Endothelial cell of umbilical vein (primary cell): ENCODE measurements at regions of chr11 and their contacts with region 1.

Region 1: GRCh38 chr11:35237860-35238715 is 99.1 kb downstream of the CD44 start:
- DNase-seq: peak; percentile 70
- H3K4me3 ChIP-seq: no peak overlapping the region
- H3K27ac ChIP-seq: no peak overlapping the region
- H3K4me1 ChIP-seq: no peaks in the 10 kb centered on the region
- H3K27me3 ChIP-seq: peaks cover 5 to 21% of the 10 kb centered on the region in 2 experiments
- CTCF ChIP-seq: peak; percentile 78 to 81
- POLR2A ChIP-seq: no peak

Region 2: DNA sequence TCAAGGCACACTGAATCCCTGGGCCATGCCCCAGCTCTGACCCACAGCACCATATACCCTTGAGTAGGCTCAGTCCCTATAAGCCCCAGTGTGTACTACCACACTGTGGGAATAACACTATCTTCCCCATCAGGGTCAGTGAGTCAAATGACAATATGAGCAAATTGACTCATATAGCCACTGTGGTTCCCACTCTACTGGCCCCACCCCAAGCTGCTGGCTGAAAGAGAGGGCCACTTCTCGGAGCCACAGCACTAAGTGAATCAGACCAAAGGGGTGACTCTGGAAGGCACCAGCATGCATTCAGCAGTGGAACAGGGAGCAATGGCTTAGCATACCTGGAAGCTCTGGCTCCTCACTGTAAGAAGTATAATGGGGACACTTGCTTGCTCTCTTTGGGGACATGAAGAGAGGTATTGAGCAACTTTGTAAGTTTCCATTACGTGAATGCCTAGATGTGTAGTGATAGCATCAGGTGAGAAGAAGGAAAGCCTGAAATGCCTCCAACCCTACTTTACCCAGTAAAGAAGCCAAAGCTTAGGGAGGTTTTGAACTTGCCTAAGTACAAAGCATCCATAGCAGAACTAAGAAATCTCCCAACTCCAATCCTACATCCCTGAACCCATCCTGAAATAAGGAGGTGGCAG is 1515.4 kb before region 1 on chr11:
- CTCF ChIA-PET with region 1: no interaction called
- POLR2A ChIA-PET with region 1: no interaction called
- dilution Hi-C with region 1: no loop called
- intact Hi-C with region 1: no loop called
- DNase-seq: peak; percentile 69
- H3K4me3 ChIP-seq: no peak overlapping the region
- H3K27ac ChIP-seq: peak overlapping the region; percentile 99
- H3K4me1 ChIP-seq: peaks cover 60% of the 10 kb centered on the region
- H3K27me3 ChIP-seq: no peaks in the 10 kb centered on the region
- CTCF ChIP-seq: no peak
- POLR2A ChIP-seq: no peak

Region 3: DNA sequence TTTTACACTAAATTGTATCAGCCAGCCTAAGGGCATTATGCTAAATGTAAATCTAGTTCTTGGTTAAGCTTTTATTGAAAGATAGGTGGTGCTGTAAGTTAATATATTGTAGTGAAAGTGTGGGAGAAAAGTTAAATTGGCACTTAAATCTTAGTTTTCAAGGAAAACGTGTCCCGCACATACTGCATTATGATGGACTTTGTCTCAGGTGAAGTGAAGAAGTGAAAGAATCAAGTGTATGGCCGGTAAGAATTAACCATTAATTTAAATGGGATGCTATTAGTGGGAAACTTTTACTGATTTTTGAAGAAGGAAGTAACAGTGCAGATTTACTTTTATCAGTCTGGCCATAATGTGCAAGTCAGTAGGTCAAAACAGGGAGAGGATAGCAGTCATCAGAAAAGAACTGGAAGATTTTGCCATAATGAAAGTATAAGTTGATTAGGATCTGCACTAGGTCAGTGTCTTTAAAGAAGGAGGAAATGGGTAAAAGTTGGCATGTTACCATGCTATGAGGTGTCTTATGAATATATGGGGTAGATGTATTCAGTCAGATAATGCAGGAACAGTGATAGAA is 240.0 kb before region 1 on chr11:
- CTCF ChIA-PET with region 1: interaction called, 32 read pairs
- POLR2A ChIA-PET with region 1: no interaction called
- dilution Hi-C with region 1: no loop called
- intact Hi-C with region 1: loop called (anchors 1 kb)
- DNase-seq: peak; percentile 26
- H3K4me3 ChIP-seq: no peak overlapping the region
- H3K27ac ChIP-seq: no peak overlapping the region
- H3K4me1 ChIP-seq: peaks cover 4% of the 10 kb centered on the region
- H3K27me3 ChIP-seq: no peaks in the 10 kb centered on the region
- CTCF ChIP-seq: no peak
- POLR2A ChIP-seq: no peak